AG04450 (cell line): ENCODE measurements at regions of chr4 and their contacts with region 1.

Region 1: DNA sequence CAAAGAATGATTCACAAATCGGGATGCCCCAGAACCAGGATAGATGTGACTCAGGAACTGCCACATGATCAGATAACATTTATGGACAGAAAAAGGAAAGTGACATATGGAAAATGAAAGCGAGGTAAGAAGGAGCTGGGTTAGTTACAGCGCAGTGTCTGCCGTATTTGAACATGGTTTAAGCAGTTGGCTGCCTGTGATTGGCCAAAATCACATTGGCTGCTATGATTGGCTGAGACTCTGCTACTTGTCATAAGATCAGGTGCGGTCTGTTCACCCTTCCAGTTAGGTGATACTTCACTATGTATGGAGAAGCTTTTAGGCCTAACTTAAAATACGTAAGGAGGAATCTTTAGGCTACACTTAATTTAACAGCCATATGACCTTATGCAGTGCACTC is 322.7 kb upstream of the HAND2 start:
- DNase-seq: no peak
- H3K4me3 ChIP-seq: no peak overlapping the region
- H3K27ac ChIP-seq: no peak overlapping the region
- H3K27me3 ChIP-seq: no peaks in the 10 kb centered on the region
- CTCF ChIP-seq: no peak

Region 2: DNA sequence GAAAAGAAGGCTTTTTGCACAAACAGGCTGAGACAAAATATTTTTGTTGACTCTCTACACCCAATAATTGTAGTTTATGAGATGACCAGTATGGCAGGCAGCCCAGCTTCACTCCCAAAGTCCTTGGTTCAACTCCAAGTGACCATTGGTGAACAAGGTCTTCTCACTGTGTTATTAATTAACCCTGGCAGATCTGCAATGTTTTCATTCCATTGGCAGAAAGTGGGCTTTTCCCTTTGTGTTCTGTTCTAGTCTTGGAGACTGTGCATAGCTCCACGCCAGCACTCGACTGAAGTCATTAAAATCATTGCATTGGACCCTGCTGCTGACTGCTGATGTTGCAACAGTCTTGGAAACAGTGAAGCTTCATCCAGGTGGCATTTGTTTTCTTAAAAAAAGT is 45.4 kb before region 1 on chr4:
- CTCF ChIA-PET with region 1: interaction called, 10 read pairs
- POLR2A ChIA-PET with region 1: no interaction called
- DNase-seq: no peak
- H3K4me3 ChIP-seq: no peak overlapping the region
- H3K27ac ChIP-seq: no peak overlapping the region
- H3K27me3 ChIP-seq: no peaks in the 10 kb centered on the region
- CTCF ChIP-seq: no peak

Region 3: GRCh38 chr4:174061026-174061425 is 208.3 kb after region 1 on chr4:
- CTCF ChIA-PET with region 1: no interaction called
- POLR2A ChIA-PET with region 1: no interaction called
- DNase-seq: no peak
- H3K4me3 ChIP-seq: no peak overlapping the region
- H3K27ac ChIP-seq: no peak overlapping the region
- H3K27me3 ChIP-seq: no peaks in the 10 kb centered on the region
- CTCF ChIP-seq: no peak